ENCODE measurements at regions of chr1 and their contacts with region 1.

Region 1: GRCh38 chr1:166479052-166479631 is 312.3 kb upstream of the FAM78B start:
- DNase-seq: peak; percentile 46 to 52
- H3K4me3 ChIP-seq: no peak overlapping the region
- H3K4me3 Mint-ChIP-seq: no peak overlapping the region
- H3K27ac Mint-ChIP-seq: no peak overlapping the region
- H3K4me1 ChIP-seq: no peaks in the 10 kb centered on the region
- H3K4me1 Mint-ChIP-seq: no peaks in the 10 kb centered on the region
- H3K27me3 ChIP-seq: no peaks in the 10 kb centered on the region
- H3K27me3 Mint-ChIP-seq: peaks cover 3% of the 10 kb centered on the region
- CTCF ChIP-seq: peak; percentile 75 to 82

Region 2: GRCh38 chr1:165717918-165718515 is 761.1 kb before region 1 on chr1:
- CTCF ChIA-PET with region 1: no interaction called
- POLR2A ChIA-PET with region 1: no interaction called
- intact Hi-C with region 1: loop called (anchors 10 kb)
- DNase-seq: peak; percentile 57 to 65
- H3K4me3 ChIP-seq: no peak overlapping the region
- H3K4me3 Mint-ChIP-seq: no peak overlapping the region
- H3K27ac Mint-ChIP-seq: no peak overlapping the region
- H3K4me1 ChIP-seq: no peaks in the 10 kb centered on the region
- H3K4me1 Mint-ChIP-seq: no peaks in the 10 kb centered on the region
- H3K27me3 ChIP-seq: no peaks in the 10 kb centered on the region; the same call in 1 of the 2 replicates
- H3K27me3 Mint-ChIP-seq: no peaks in the 10 kb centered on the region
- CTCF ChIP-seq: peak; percentile 56 to 88

Region 3: GRCh38 chr1:166300767-166301166 is 178.4 kb before region 1 on chr1:
- CTCF ChIA-PET with region 1: no interaction called
- POLR2A ChIA-PET with region 1: no interaction called
- intact Hi-C with region 1: loop called (anchors 1 kb)
- DNase-seq: no peak
- H3K4me3 ChIP-seq: no peak overlapping the region
- H3K4me3 Mint-ChIP-seq: no peak overlapping the region
- H3K27ac Mint-ChIP-seq: no peak overlapping the region
- H3K4me1 ChIP-seq: no peaks in the 10 kb centered on the region
- H3K4me1 Mint-ChIP-seq: no peaks in the 10 kb centered on the region
- H3K27me3 ChIP-seq: no peaks in the 10 kb centered on the region
- H3K27me3 Mint-ChIP-seq: peaks cover 17% of the 10 kb centered on the region
- CTCF ChIP-seq: peak in 1 of 2 experiments; percentile 30

Region 4: DNA sequence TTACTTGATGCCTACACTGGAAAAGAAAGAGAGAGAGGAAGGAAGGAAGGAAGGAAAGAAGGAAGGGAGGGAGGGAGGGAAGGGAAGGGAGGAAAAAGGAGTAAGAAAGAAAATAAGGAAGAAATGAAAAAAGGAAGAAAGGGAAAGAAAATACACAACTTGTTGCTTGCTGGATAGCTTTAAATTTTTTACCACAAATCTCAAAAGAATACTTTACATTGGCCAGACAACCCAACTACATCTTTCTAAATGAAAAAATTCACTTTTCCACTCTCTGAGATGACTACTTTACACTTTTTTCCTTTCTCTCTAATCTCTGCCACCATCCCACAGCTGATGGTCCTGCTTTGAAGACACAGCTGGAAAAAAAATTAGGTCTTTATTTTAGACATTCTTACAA is 83.4 kb before region 1 on chr1:
- CTCF ChIA-PET with region 1: no interaction called
- POLR2A ChIA-PET with region 1: no interaction called
- intact Hi-C with region 1: no loop called
- DNase-seq: no peak
- H3K4me3 ChIP-seq: no peak overlapping the region
- H3K4me3 Mint-ChIP-seq: no peak overlapping the region
- H3K27ac Mint-ChIP-seq: no peak overlapping the region
- H3K4me1 ChIP-seq: no peaks in the 10 kb centered on the region
- H3K4me1 Mint-ChIP-seq: no peaks in the 10 kb centered on the region
- H3K27me3 ChIP-seq: no peaks in the 10 kb centered on the region
- H3K27me3 Mint-ChIP-seq: no peaks in the 10 kb centered on the region
- CTCF ChIP-seq: no peak

Measured in Caco-2 (cell line).